ENCODE measurements at regions of chr2 and their contacts with region 1.

Region 1: DNA sequence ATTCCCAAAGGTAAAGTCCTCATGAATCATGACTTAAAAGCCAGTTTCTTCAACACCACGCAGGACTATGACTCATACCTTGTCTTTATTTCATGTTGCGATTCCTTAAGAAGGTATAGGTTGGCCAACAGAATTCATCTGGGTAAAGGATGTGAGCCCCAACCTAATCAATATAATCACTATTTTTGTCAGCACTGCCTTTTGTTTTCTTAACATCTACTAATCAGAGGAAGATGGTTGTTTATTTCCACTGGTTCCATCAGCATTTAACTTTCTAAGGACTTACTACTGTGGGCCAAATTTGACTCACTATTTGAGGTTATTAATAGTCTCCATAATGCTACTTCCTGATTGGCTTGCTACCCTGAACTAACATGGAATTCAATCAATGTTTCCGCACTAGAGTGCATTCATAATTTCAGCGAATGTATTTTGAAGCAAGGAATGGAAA is 78.6 kb downstream of the SCG2 start:
- DNase-seq: no peak
- ATAC-seq: peak in 1 of 4 donors; percentile 25
- H3K4me3 ChIP-seq: no peak overlapping the region
- H3K27ac ChIP-seq: no peak overlapping the region
- H3K4me1 ChIP-seq: peaks cover 0 to 5% (median 0%) of the 10 kb centered on the region in 12 donors
- H3K27me3 ChIP-seq: no peaks in the 10 kb centered on the region
- CTCF ChIP-seq: no peak
- POLR2A ChIP-seq: no peak

Region 2: DNA sequence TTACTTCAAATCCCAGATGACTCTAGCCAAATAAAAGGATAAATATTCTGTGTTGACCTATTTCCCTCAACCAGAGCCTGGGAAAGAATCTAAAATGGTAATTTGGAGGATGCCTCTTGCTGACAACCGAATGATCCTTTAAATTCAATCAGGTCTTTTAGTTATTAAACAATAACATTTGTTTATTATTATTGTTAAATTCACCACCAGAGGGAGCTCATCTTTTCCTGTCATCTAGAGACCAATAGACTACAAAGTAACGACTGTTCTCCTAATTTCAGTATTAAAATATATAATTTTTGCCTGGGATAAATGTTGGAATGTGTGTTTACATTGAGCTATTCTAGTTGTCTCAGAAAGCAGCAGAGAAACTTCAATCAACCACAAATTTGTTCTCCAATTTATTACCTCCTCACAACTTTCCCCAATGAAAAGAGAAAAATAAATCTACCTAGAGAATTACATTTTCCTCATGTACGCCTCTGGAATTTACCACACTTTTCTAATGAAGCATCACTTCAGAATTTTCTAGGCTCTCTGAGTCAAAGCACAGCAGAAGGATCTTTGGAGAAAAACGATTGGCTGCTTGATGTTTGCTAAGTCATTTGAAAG is 64.1 kb before region 1 on chr2:
- intact Hi-C with region 1: no loop called
- DNase-seq: no peak
- ATAC-seq: no peak
- H3K4me3 ChIP-seq: no peak overlapping the region
- H3K27ac ChIP-seq: no peak overlapping the region
- H3K4me1 ChIP-seq: peaks cover 0 to 14% (median 0%) of the 10 kb centered on the region in 12 donors
- H3K27me3 ChIP-seq: no peaks in the 10 kb centered on the region
- CTCF ChIP-seq: peak in 11 of 12 donors; percentile 16 to 56 (median 40)
- POLR2A ChIP-seq: no peak

Region 3: DNA sequence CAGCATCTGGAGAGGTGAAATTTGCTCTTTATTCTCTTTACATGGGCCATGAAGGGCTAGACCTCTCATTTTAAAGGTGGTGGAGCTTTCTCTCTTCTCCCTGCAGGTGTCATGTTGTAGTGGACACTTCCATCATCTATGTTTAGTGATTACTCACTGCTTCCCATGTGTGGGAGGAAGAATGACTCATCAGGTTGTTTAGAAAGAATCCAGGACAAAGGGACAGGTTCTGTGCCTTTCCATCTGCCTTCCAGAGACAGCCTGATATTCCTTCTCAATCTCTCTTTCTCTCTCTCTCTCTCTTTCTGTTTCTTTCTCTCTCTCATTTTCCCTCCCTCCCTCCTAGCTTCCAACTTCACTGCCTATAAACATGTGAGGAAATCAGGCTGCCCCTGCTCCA is 39.9 kb after region 1 on chr2:
- intact Hi-C with region 1: no loop called
- DNase-seq: no peak
- ATAC-seq: peak in 3 of 4 donors; percentile 34 to 87 (median 37)
- H3K4me3 ChIP-seq: no peak overlapping the region
- H3K27ac ChIP-seq: no peak overlapping the region
- H3K4me1 ChIP-seq: peaks cover 0 to 10% (median 0%) of the 10 kb centered on the region in 12 donors
- H3K27me3 ChIP-seq: no peaks in the 10 kb centered on the region
- CTCF ChIP-seq: no peak
- POLR2A ChIP-seq: no peak

Region 4: GRCh38 chr2:223580951-223581350 is 57.4 kb after region 1 on chr2:
- intact Hi-C with region 1: loop called in 1 of 10 experiments (anchors 2 kb)
- DNase-seq: no peak
- ATAC-seq: peak in 3 of 4 donors; percentile 58 to 80 (median 65)
- H3K4me3 ChIP-seq: peak overlapping the region in 1 of 12 donors; percentile 9
- H3K27ac ChIP-seq: no peak overlapping the region
- H3K4me1 ChIP-seq: peaks cover 0 to 8% (median 0%) of the 10 kb centered on the region in 12 donors
- H3K27me3 ChIP-seq: no peaks in the 10 kb centered on the region
- CTCF ChIP-seq: no peak
- POLR2A ChIP-seq: no peak

Region 5: GRCh38 chr2:223654384-223654915 is 130.9 kb after region 1 on chr2:
- intact Hi-C with region 1: no loop called
- DNase-seq: no peak
- ATAC-seq: no peak
- H3K4me3 ChIP-seq: no peak overlapping the region
- H3K27ac ChIP-seq: no peak overlapping the region
- H3K4me1 ChIP-seq: no peaks in the 10 kb centered on the region
- H3K27me3 ChIP-seq: peaks cover 0 to 11% (median 0%) of the 10 kb centered on the region in 9 donors
- CTCF ChIP-seq: no peak
- POLR2A ChIP-seq: no peak